HepG2 (cell line): ENCODE measurements at regions of chr9 and their contacts with region 1.

Region 1: GRCh38 chr9:12813960-12814876 is 39.4 kb downstream of the LURAP1L start:
- DNase-seq: peak; percentile 92
- ATAC-seq: peak; percentile 86
- H3K4me3 ChIP-seq: peak overlapping the region; percentile 30 to 61 (median 56); a peak in 5 of 6 replicates
- H3K27ac ChIP-seq: peak overlapping the region; percentile 92
- H3K4me1 ChIP-seq: peaks cover 70% of the 10 kb centered on the region
- H3K27me3 ChIP-seq: no peaks in the 10 kb centered on the region
- CTCF ChIP-seq: no peak
- EP300 ChIP-seq: peak; percentile 61 to 71; a peak in 2 of 4 replicates
- POLR2A ChIP-seq: peak; percentile 38 to 44; a peak in 2 of 4 replicates
- RAD21 ChIP-seq: no peak; the same call in 1 of the 2 replicates

Region 2: GRCh38 chr9:12784461-12785259 is 29.6 kb before region 1 on chr9:
- CTCF ChIA-PET with region 1: no interaction called
- POLR2A ChIA-PET with region 1: interaction called, 342 read pairs
- in situ Hi-C with region 1: loop called (anchors 5 kb)
- intact Hi-C with region 1: no loop called
- DNase-seq: peak; percentile 96
- ATAC-seq: peak; percentile 99
- H3K4me3 ChIP-seq: peak overlapping the region in 1 of 3 experiments; percentile 45; a peak in 2 of 6 replicates
- H3K27ac ChIP-seq: peak overlapping the region; percentile 88
- H3K4me1 ChIP-seq: peaks cover 32% of the 10 kb centered on the region
- H3K27me3 ChIP-seq: no peaks in the 10 kb centered on the region
- CTCF ChIP-seq: no peak
- EP300 ChIP-seq: peak in 1 of 2 experiments; percentile 89; a peak in 2 of 4 replicates
- POLR2A ChIP-seq: peak in 1 of 2 experiments; percentile 34; a peak in 1 of 4 replicates
- RAD21 ChIP-seq: no peak

Region 3: GRCh38 chr9:12794101-12794799 is 20.0 kb before region 1 on chr9:
- CTCF ChIA-PET with region 1: no interaction called
- POLR2A ChIA-PET with region 1: interaction called, 10 read pairs
- in situ Hi-C with region 1: no loop called
- intact Hi-C with region 1: loop called (anchors 2 kb)
- DNase-seq: peak; percentile 35
- ATAC-seq: peak; percentile 73
- H3K4me3 ChIP-seq: no peak overlapping the region
- H3K27ac ChIP-seq: peak overlapping the region; percentile 19
- H3K4me1 ChIP-seq: peaks cover 27% of the 10 kb centered on the region
- H3K27me3 ChIP-seq: no peaks in the 10 kb centered on the region
- CTCF ChIP-seq: no peak
- EP300 ChIP-seq: peak in 1 of 2 experiments; percentile 26; a peak in 1 of 4 replicates
- POLR2A ChIP-seq: no peak
- RAD21 ChIP-seq: no peak